Activated CD4-positive, alpha-beta memory T cell treated with anti-CD3 and anti-CD28 coated beads for 36 hours (primary cell): ENCODE measurements at regions of chr5 and their contacts with region 1.

Region 1: GRCh38 chr5:172106511-172107356 is 81.3 kb downstream of the STK10 start:
- DNase-seq: peak; percentile 73
- H3K4me3 Mint-ChIP-seq: no peak overlapping the region
- H3K27ac Mint-ChIP-seq: peak overlapping the region; percentile 79
- H3K4me1 Mint-ChIP-seq: peaks cover 57% of the 10 kb centered on the region
- H3K27me3 Mint-ChIP-seq: no peaks in the 10 kb centered on the region

Region 2: DNA sequence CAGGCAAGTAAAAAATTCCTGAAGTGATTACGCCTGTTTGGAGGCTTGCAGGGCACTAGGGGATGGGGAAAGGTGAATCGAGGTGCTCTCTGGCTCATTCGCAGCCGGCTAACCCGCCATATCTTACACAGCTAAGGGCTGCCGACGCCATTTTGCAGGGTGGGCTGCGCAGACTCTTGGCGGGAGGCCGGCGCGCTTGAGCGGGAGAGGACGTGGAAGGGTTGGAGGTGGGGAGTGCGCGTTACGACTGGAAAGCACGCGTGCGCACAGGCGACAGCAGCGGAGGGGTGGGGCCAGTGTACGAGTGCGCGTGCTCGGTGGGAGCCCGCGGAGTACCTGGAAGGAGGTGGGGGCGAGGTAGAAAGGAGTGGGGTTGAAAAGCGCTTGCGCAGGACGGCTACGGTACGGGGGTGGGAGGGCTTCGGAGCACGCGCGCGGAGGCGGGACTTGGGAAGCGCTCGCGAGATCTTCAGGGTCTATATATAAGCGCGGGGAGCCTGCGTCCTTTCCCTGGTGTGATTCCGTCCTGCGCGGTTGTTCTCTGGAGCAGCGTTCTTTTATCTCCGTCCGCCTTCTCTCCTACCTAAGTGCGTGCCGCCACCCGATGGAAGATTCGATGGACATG is 719.3 kb before region 1 on chr5 and contains the start of gene NPM1:
- CTCF ChIA-PET with region 1: no interaction called
- POLR2A ChIA-PET with region 1: no interaction called
- intact Hi-C with region 1: loop called (anchors 5 kb)
- DNase-seq: peak; percentile 98
- H3K4me3 Mint-ChIP-seq: peak within 1 kb of the TSS; percentile 93
- H3K27ac Mint-ChIP-seq: peak within 1 kb of the TSS; percentile 96
- H3K4me1 Mint-ChIP-seq: peaks cover 39% of the 10 kb centered on the region
- H3K27me3 Mint-ChIP-seq: peaks cover 3% of the 10 kb centered on the region
- total RNA-seq, gene NPM1: 2,483 to 2,592 TPM

Region 3: DNA sequence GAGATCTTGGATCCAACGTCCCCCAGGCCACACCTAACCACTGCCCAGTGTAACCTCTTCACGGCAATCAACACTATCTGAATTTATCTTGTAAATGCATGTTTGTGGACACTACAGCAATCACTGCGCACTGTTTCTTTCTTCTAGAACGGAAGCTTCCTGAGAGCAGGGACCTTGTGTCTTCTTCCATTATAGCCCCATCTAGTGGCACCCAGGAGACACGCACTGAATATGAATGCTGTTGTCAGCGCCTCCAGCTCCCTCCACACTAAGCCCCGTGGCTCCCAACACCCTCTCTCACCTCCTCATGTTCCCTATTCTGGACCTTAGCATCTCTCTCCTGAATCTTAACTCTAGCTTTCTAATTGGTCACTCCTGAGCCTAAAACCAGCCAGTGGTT is 248.4 kb before region 1 on chr5:
- CTCF ChIA-PET with region 1: no interaction called
- POLR2A ChIA-PET with region 1: no interaction called
- intact Hi-C with region 1: no loop called
- DNase-seq: no peak
- H3K4me3 Mint-ChIP-seq: no peak overlapping the region
- H3K27ac Mint-ChIP-seq: no peak overlapping the region
- H3K4me1 Mint-ChIP-seq: no peaks in the 10 kb centered on the region
- H3K27me3 Mint-ChIP-seq: no peaks in the 10 kb centered on the region

Region 4: GRCh38 chr5:172006321-172007174 is 100.2 kb before region 1 on chr5 and contains the start of gene FBXW11:
- CTCF ChIA-PET with region 1: no interaction called
- POLR2A ChIA-PET with region 1: interaction called, 4 read pairs
- intact Hi-C with region 1: loop called (anchors 1 kb)
- DNase-seq: peak; percentile 97
- H3K4me3 Mint-ChIP-seq: peak within 1 kb of the TSS; percentile 93
- H3K27ac Mint-ChIP-seq: peak within 1 kb of the TSS; percentile 92
- H3K4me1 Mint-ChIP-seq: peaks cover 53% of the 10 kb centered on the region
- H3K27me3 Mint-ChIP-seq: no peaks in the 10 kb centered on the region
- total RNA-seq, gene FBXW11: 47.2 to 47.4 TPM

Region 5: GRCh38 chr5:172074896-172075295 is 31.8 kb before region 1 on chr5:
- CTCF ChIA-PET with region 1: no interaction called
- POLR2A ChIA-PET with region 1: no interaction called
- intact Hi-C with region 1: no loop called
- DNase-seq: no peak
- H3K4me3 Mint-ChIP-seq: no peak overlapping the region
- H3K27ac Mint-ChIP-seq: no peak overlapping the region
- H3K4me1 Mint-ChIP-seq: peaks cover 29% of the 10 kb centered on the region
- H3K27me3 Mint-ChIP-seq: no peaks in the 10 kb centered on the region

Region 6: GRCh38 chr5:172133359-172134029 is 26.8 kb after region 1 on chr5:
- CTCF ChIA-PET with region 1: interaction called, 3 read pairs
- POLR2A ChIA-PET with region 1: interaction called, 7 read pairs
- intact Hi-C with region 1: loop called (anchors 1 kb)
- DNase-seq: peak; percentile 85
- H3K4me3 Mint-ChIP-seq: peak overlapping the region; percentile 43
- H3K27ac Mint-ChIP-seq: peak overlapping the region; percentile 92
- H3K4me1 Mint-ChIP-seq: peaks cover 64% of the 10 kb centered on the region
- H3K27me3 Mint-ChIP-seq: no peaks in the 10 kb centered on the region

Region 7: DNA sequence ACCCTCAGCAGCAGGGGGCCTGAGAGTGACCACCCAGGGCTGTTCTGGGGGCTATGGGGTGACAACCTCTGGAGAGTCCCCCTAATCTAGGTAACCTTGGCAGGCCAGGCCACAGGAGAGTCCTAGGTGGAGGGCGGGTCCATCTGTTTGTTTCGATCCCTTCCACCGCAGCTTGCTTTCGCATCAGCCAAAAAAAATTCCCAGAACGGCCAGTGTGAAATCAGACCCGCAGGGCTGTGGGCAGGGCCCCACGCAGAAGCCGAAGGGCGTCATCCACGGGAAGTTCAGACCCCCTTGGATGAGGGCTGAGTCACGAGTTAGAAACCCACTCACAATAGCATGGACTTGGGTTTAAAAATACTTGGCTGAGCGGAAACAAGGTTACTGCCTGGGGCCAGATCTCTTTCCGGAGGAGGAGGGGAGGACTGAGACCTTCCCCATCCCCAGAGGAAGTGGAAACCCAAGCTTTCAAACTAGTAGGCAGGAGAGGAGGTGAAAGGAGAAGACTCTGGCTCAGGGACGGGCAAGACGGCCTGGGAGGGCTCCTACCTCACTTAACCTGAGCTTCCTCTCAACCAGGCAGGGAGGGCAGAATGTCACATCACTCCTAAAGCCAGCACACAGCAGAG is 72.7 kb after region 1 on chr5:
- CTCF ChIA-PET with region 1: interaction called, 142 read pairs
- POLR2A ChIA-PET with region 1: interaction called, 70 read pairs
- intact Hi-C with region 1: loop called (anchors 1 kb)
- DNase-seq: peak; percentile 67
- H3K4me3 Mint-ChIP-seq: peak overlapping the region; percentile 73
- H3K27ac Mint-ChIP-seq: peak overlapping the region; percentile 99
- H3K4me1 Mint-ChIP-seq: peaks cover 88% of the 10 kb centered on the region
- H3K27me3 Mint-ChIP-seq: no peaks in the 10 kb centered on the region

Region 8: DNA sequence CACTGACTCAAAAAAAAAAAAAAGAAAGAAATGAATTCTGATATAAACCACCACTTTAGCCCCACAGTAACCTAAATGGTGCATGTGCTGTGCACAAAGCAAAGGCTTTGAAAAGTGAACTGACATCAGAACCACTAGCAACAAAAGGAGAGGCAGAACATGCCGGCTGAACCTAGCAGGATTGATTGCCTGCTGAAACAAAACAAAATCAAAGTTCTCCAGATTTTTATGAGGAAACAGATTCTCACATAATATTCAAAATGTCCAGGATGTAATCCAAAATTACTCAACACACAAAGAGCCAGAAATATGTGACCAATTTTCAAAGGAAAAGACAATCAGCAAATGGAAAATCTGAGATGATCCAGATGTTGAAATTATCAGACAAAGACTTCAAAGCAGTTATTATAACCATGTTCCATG is 139.0 kb after region 1 on chr5:
- CTCF ChIA-PET with region 1: no interaction called
- POLR2A ChIA-PET with region 1: no interaction called
- intact Hi-C with region 1: no loop called
- DNase-seq: no peak
- H3K4me3 Mint-ChIP-seq: no peak overlapping the region
- H3K27ac Mint-ChIP-seq: no peak overlapping the region
- H3K4me1 Mint-ChIP-seq: peaks cover 6% of the 10 kb centered on the region
- H3K27me3 Mint-ChIP-seq: no peaks in the 10 kb centered on the region

Region 9: DNA sequence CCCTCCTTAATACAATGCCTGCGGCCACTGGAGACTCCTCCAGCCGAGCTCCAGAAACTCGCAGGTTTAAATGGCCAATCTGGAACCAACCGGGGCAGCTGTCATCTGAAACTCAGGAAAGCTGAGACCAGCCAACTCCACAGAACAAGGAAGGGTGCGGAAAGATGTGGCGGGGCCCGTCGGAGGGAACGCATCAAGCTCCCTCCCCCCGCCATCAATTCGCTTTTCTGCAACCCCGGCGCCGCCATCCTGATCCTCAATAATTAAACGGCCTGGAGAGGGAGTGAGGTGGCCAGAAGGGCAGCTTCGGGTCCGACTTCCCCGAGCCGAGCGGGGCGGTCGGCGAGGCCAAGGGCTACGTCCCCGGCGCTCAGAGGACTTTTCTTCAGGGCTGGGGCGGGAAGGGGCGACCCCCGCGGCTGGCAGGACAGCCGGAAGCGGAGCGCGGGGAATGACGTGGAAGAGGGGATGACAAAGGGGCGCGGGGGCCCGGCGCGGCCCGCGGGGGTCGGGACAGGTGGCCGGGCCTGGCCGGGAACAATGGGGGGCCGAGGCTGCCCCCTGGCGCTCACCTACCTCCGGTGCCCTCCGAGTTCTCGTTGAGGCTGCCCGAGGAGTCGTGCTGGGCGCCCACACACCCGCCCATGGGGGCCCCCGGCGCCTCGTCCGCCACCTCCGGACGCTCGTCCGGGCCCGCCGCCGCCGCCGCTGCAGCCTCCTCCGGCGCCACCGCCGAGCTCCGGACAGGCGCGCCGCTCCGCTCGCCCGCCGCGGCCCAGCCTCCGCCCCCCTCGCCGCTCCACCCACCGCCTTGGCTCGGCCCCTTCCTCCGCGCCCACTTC is 176.5 kb after region 1 on chr5 and contains the start of gene UBTD2:
- CTCF ChIA-PET with region 1: interaction called, 13 read pairs
- POLR2A ChIA-PET with region 1: no interaction called
- intact Hi-C with region 1: loop called (anchors 2 kb)
- DNase-seq: peak; percentile 83
- H3K4me3 Mint-ChIP-seq: peak within 1 kb of the TSS; percentile 79
- H3K27ac Mint-ChIP-seq: no peak within 1 kb of the TSS
- H3K4me1 Mint-ChIP-seq: peaks cover 26% of the 10 kb centered on the region
- H3K27me3 Mint-ChIP-seq: no peaks in the 10 kb centered on the region
- total RNA-seq, gene UBTD2: 4.6 to 4.9 TPM

Region 10: DNA sequence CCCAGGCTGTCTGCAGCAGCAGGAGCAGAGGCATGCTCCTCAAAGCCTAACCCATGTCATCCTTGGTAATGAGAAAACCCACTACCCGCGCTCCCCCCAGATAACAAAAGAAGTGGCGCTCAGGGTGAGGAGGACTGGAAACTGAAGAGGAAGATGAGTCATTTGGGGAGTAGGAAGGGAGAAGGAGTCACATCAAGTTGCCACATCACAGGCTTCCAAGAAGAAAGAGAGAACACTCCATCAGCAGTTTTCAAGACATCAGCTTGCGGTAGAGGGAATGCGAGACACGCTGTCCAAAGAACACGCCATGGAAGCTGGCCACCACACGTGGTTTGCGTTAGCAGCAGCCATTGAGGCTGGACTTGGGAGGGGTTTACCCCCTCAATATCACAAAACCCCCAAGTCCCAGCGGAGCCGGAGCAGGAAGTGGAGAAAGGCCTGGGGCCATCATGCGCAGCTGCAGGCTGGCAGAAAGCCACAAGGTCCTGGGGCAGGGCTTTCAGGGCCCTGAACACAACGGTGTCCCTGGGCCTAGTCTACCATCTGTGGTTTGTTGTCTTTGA is 306.1 kb after region 1 on chr5:
- CTCF ChIA-PET with region 1: no interaction called
- POLR2A ChIA-PET with region 1: no interaction called
- intact Hi-C with region 1: loop called (anchors 5 kb)
- DNase-seq: peak; percentile 51
- H3K4me3 Mint-ChIP-seq: no peak overlapping the region
- H3K27ac Mint-ChIP-seq: peak overlapping the region; percentile 2
- H3K4me1 Mint-ChIP-seq: peaks cover 22% of the 10 kb centered on the region
- H3K27me3 Mint-ChIP-seq: peaks cover 9% of the 10 kb centered on the region